Aorta (tissue), 5 donors: ENCODE measurements at regions of chr15 and their contacts with region 1.

Region 1: GRCh38 chr15:46442184-46442583 is 807.4 kb downstream of the SQOR start:
- DNase-seq: peak in 1 of 2 donors; percentile 52
- ATAC-seq: no peak
- H3K4me3 ChIP-seq: no peak overlapping the region
- H3K27ac ChIP-seq: peak overlapping the region in 1 of 2 donors; percentile 48
- H3K4me1 ChIP-seq: no peaks in the 10 kb centered on the region
- H3K27me3 ChIP-seq: no peaks in the 10 kb centered on the region

Region 2: DNA sequence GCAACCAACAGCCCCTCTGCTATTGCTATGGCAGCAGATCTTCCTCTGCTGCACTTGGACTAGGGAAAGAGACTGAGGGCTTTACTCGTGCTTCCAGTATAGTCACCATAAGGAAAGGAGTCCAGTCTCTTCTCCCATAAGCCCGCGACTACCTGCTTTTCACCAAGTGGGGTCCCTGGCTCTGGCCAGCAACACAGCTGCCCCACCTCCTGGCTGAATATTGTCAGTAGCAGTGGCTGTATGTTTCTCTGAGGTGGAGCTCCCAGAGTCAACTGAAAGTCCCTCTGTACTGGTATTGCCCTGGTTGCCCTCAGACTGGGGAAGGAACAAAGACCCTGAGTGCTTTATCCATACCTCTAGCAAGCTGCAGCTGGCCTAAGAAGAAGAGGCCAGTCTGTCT is 87.7 kb before region 1 on chr15:
- intact Hi-C with region 1: no loop called
- DNase-seq: no peak
- ATAC-seq: no peak
- H3K4me3 ChIP-seq: no peak overlapping the region
- H3K27ac ChIP-seq: no peak overlapping the region
- H3K4me1 ChIP-seq: peaks cover 0 to 4% of the 10 kb centered on the region in 2 donors
- H3K27me3 ChIP-seq: no peaks in the 10 kb centered on the region

Region 3: DNA sequence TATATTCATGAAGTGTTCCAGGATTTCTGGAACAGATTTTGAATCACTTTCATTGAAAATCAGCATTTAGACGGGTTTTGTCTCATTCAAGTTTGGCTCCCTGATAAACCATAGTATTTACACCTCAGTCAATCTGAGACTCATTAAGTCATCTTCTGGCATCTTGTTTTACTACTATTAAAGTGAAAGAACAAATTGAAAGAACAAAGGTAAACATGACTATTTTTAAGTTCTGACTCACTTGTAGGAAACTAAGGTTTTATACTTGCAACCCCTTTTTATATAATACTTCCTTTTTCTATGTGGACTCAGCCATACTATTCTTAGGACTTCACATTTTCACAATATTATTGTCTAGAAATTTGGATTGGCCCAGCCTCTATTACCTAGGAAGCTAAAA is 47.1 kb after region 1 on chr15:
- intact Hi-C with region 1: loop called in 1 of 2 experiments (anchors 5 kb)
- DNase-seq: no peak
- ATAC-seq: no peak
- H3K4me3 ChIP-seq: no peak overlapping the region
- H3K27ac ChIP-seq: no peak overlapping the region
- H3K4me1 ChIP-seq: no peaks in the 10 kb centered on the region
- H3K27me3 ChIP-seq: no peaks in the 10 kb centered on the region